Sciatic nerve (tissue), 2 donors: ENCODE measurements at regions of chr10 and their contacts with region 1.

Region 1: GRCh38 chr10:132223156-132223590 is 36.4 kb downstream of the DPYSL4 start:
- DNase-seq: peak; percentile 88
- ATAC-seq: peak; percentile 93

Region 2: DNA sequence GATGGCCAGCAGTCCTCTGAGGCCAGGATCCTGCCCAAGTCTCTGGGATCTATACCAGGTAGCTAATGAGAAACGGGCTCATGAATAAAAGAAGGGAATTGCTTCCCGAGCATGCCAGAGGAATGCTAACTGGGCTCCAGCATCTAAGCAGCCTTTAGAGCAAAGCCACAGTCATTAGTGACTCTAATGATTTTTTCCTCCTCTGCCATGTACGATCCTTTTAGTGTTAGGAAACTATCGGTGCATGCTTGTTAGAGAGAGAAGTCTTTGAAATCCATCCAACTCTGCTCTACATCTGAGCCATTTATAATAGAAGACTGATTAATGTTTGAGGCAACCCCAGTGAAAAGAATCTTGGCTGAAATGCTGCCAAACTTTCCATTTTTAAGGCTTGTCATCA is 786.7 kb before region 1 on chr10:
- intact Hi-C with region 1: no loop called
- DNase-seq: no peak
- ATAC-seq: peak; percentile 58

Region 3: GRCh38 chr10:132359305-132360040 is 136.3 kb after region 1 on chr10:
- intact Hi-C with region 1: loop called (anchors 10 kb)
- DNase-seq: no peak
- ATAC-seq: no peak

Region 4: DNA sequence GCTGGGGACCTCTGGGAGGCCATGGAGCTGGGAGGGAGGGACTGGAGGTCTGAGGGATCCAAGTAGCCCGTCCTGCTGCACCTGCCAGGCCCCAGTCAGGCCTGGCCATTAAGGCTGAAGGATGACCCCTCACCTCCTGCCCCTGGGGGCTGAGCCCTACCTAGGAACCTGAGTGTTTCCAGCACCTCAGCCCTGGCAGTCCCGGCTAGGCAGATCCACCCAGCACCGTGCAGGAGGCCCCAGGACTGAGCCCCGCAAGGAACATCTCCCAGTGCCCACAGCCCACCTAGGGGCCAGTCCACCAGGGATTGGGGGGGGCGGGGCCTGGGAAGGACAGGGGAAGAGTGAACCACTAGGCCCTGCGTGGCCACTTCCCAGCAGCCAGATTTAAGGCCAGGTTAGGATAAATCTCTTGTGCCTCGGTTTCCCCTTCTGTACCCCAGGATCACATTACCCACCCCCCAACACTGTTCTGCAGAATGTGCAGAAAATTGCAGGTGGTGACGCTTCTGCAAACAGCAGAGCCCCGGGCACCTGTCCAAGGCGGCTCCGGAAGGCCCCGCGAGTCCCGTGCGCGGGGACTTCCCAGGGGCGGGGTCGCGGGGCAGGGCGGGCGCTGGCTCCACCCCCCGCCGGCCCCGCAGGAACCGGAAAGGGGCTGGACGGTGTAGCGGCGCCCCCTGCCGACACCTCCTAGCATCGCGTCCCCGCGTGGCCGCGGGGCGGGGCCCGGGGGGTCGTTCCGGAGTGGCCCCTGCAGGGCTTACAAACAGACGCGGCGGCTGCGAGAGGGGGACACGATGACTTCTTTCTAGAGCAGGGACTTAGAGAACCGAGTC is 229.7 kb after region 1 on chr10:
- intact Hi-C with region 1: loop called (anchors 5 kb)
- DNase-seq: peak; percentile 93
- ATAC-seq: peak; percentile 82